ENCODE measurements at regions of chr1 and their contacts with region 1.

Region 1: DNA sequence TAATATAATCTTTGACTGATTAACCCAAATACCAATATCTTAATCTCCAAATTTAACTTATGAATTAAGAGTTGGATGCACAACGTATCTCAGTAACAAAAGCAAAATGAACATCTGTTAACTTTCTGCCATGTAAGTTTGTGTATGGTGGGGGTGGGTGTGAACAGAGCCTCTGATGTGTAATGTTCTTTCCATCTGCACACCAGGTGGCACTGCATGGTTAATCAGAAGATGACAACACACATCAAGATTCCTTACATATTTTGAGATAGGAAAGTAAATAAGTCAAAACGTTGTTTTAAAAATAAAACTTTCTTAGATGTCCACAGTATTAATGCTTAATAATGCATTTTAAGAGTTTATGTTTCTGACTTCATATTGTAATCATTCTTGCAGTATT is 251.9 kb downstream of the DPYD start:
- DNase-seq: peak; percentile 8 to 30
- H3K4me3 ChIP-seq: no peak overlapping the region
- H3K4me3 Mint-ChIP-seq: no peak overlapping the region
- H3K27ac Mint-ChIP-seq: no peak overlapping the region
- H3K4me1 ChIP-seq: no peaks in the 10 kb centered on the region
- H3K4me1 Mint-ChIP-seq: no peaks in the 10 kb centered on the region
- H3K27me3 ChIP-seq: no peaks in the 10 kb centered on the region
- H3K27me3 Mint-ChIP-seq: no peaks in the 10 kb centered on the region
- CTCF ChIP-seq: peak in 1 of 2 experiments; percentile 14

Region 2: GRCh38 chr1:97814804-97815203 is 145.9 kb after region 1 on chr1:
- CTCF ChIA-PET with region 1: no interaction called
- POLR2A ChIA-PET with region 1: no interaction called
- intact Hi-C with region 1: loop called (anchors 1 kb)
- DNase-seq: no peak
- H3K4me3 ChIP-seq: no peak overlapping the region
- H3K4me3 Mint-ChIP-seq: peak overlapping the region; percentile 32
- H3K27ac Mint-ChIP-seq: peak overlapping the region; percentile 65
- H3K4me1 ChIP-seq: peaks cover 23% of the 10 kb centered on the region
- H3K4me1 Mint-ChIP-seq: peaks cover 26% of the 10 kb centered on the region
- H3K27me3 ChIP-seq: no peaks in the 10 kb centered on the region
- H3K27me3 Mint-ChIP-seq: no peaks in the 10 kb centered on the region
- CTCF ChIP-seq: no peak